ENCODE measurements at regions of chr1 and their contacts with region 1.

Region 1: GRCh38 chr1:42335050-42335808 is at the start of gene FOXJ3:
- DNase-seq: peak; percentile 95 to 98 (median 96)
- ATAC-seq: peak; percentile 97
- H3K4me3 ChIP-seq: peak within 1 kb of the TSS; percentile 96
- H3K4me1 ChIP-seq: peaks cover 26% of the 10 kb centered on the region
- CTCF ChIP-seq: no peak
- total RNA-seq, gene FOXJ3: 47.0 to 57.3 (median 53.4) TPM

Region 2: DNA sequence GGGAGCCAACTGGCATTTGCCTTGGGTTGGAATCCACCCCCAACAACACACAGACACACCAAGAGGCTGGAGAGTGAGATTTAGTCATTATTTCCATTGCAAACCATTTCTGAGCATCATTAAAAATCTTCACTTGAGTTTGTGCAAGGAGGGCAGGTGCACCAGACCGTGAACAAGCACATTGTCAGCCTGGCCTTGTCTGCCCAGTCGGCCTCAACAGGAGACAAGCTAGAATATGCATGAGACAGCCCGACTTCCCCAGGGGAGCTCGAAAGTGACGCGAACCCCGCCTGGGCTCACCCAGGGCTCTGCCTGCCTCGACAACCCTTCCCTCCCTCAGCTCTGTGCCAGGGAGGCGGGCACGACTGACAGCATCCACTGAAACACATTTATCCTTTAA is 197.5 kb before region 1 on chr1:
- intact Hi-C with region 1: no loop called
- DNase-seq: no peak
- ATAC-seq: no peak
- H3K4me3 ChIP-seq: no peak overlapping the region
- H3K4me1 ChIP-seq: no peaks in the 10 kb centered on the region
- CTCF ChIP-seq: no peak

Region 3: DNA sequence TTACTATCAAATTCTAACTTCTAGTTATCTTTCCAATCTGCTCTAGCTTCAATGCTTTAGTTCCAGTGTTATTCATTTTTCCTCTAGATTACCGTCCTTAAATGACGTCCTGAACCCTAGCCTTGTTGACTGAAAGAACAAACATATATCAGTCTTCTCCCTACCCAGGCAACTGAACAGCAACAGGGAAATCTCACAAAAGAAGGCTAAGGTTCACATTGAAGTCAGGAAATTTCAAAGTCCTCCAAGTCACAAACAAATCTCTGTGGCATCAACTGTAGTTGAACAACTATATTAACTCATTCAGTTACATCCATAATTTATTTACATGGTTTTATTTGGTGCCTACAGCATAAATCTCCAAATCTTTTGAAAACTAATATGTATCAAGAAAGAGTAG is 19.7 kb before region 1 on chr1:
- intact Hi-C with region 1: loop called in 1 of 2 experiments (anchors 2 kb)
- DNase-seq: no peak
- ATAC-seq: peak; percentile 75
- H3K4me3 ChIP-seq: no peak overlapping the region
- H3K4me1 ChIP-seq: peaks cover 38% of the 10 kb centered on the region
- CTCF ChIP-seq: no peak

Measured in mucosa of descending colon (tissue), 3 donors.